GM10248 (cell line): ENCODE measurements at regions of chr14 and their contacts with region 1.

Region 1: GRCh38 chr14:23665375-23666192 is 29.4 kb downstream of the DHRS2 start:
- DNase-seq: no peak
- CTCF ChIP-seq: peak; percentile 63

Region 2: GRCh38 chr14:23335623-23336022 is 330.0 kb before region 1 on chr14:
- CTCF ChIA-PET with region 1: no interaction called
- POLR2A ChIA-PET with region 1: no interaction called
- DNase-seq: no peak
- CTCF ChIP-seq: no peak

Region 3: GRCh38 chr14:23646648-23647549 is 18.7 kb before region 1 on chr14:
- CTCF ChIA-PET with region 1: interaction called, 10 read pairs
- POLR2A ChIA-PET with region 1: no interaction called
- DNase-seq: no peak
- CTCF ChIP-seq: no peak

Region 4: GRCh38 chr14:23675906-23676305 is 10.3 kb after region 1 on chr14:
- CTCF ChIA-PET with region 1: interaction called, 10 read pairs
- POLR2A ChIA-PET with region 1: no interaction called
- DNase-seq: no peak
- CTCF ChIP-seq: no peak